T-cell (primary cell): ENCODE measurements at regions of chr17 and their contacts with region 1.

Region 1: GRCh38 chr17:76219670-76220383 is 20.5 kb downstream of the RNF157 start:
- DNase-seq: no peak
- ATAC-seq: no peak
- H3K4me3 ChIP-seq: no peak overlapping the region
- H3K4me3 Mint-ChIP-seq: no peak overlapping the region
- H3K27ac ChIP-seq: no peak overlapping the region
- H3K27ac Mint-ChIP-seq: peak overlapping the region in 1 of 2 donors; percentile 17
- H3K4me1 ChIP-seq: no peaks in the 10 kb centered on the region
- H3K4me1 Mint-ChIP-seq: peaks cover 33 to 45% (median 43%) of the 10 kb centered on the region in 3 donors
- H3K27me3 ChIP-seq: no peaks in the 10 kb centered on the region
- H3K27me3 Mint-ChIP-seq: no peaks in the 10 kb centered on the region

Region 2: GRCh38 chr17:76390003-76390421 is 170.2 kb after region 1 on chr17:
- CTCF ChIA-PET with region 1: no interaction called
- POLR2A ChIA-PET with region 1: interaction called in 1 of 2 experiments, 10 read pairs
- DNase-seq: no peak
- ATAC-seq: no peak
- H3K4me3 ChIP-seq: no peak overlapping the region
- H3K4me3 Mint-ChIP-seq: no peak overlapping the region
- H3K27ac ChIP-seq: no peak overlapping the region
- H3K27ac Mint-ChIP-seq: no peak overlapping the region
- H3K4me1 ChIP-seq: peaks cover 4 to 13% of the 10 kb centered on the region in 2 experiments
- H3K4me1 Mint-ChIP-seq: peaks cover 0 to 9% (median 4%) of the 10 kb centered on the region in 3 donors
- H3K27me3 ChIP-seq: peaks cover 0 to 11% of the 10 kb centered on the region in 2 experiments
- H3K27me3 Mint-ChIP-seq: no peaks in the 10 kb centered on the region